Naive thymus-derived CD4-positive, alpha-beta T cell (primary cell): ENCODE measurements at regions of chr11 and their contacts with region 1.

Region 1: DNA sequence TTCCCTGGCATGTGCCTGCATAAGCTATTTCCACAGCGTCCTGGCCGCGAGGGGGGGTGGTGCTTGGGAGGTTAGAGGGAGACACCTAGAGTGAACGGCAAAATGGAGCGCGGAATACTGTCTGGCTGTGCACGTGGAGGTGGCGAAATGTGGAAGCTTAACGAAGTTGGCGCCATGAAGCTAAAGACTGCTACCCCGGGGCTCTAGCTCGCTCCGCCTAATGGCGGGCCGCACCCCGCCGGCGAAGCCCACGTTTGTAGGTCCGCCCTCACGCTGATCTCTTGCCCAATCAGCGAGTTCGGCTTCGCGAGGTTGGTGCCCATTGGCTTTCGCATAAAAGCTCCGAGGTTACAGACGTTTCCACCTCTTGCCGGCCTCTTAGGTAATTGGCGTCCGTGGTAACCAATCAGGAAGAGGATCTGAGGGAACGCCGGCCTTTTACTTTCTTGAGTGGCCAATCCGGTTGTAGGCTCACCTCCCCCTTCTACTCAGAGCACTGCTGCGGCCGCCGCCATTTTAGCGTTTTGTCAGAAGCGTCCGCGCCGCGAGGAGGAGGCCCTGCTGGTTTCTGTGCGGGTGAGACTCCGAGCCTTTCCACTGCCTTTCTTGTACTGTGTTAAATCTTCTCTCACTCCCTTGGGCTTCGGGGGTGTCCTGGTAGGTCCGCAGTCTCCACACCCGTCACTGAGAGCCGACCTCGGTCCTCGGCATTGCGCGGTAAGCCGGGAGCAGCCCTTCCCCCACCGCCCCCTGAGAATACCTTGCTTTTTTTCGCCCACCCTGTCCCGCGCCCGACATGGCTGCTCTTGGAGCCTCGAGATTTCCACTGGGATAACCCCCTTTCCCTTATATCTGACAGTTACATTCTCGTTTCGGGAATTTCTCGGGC is at the start of gene RBM4:
- DNase-seq: peak; percentile 80 to 99 (median 98)
- ATAC-seq: peak; percentile 93
- H3K4me3 ChIP-seq: peak within 1 kb of the TSS; percentile 91
- H3K4me3 Mint-ChIP-seq: peak within 1 kb of the TSS; percentile 92 to 100 (median 94)
- H3K27ac ChIP-seq: peak within 1 kb of the TSS; percentile 93
- H3K27ac Mint-ChIP-seq: peak within 1 kb of the TSS; percentile 87 to 98 (median 96)
- H3K4me1 ChIP-seq: peaks cover 44 to 48% of the 10 kb centered on the region in 2 donors
- H3K4me1 Mint-ChIP-seq: peaks cover 45 to 73% (median 68%) of the 10 kb centered on the region in 7 donors
- H3K27me3 ChIP-seq: no peaks in the 10 kb centered on the region
- H3K27me3 Mint-ChIP-seq: no peaks in the 10 kb centered on the region
- total RNA-seq, gene RBM4: 139 to 239 (median 198) TPM

Region 2: GRCh38 chr11:66408488-66409214 is 229.8 kb before region 1 on chr11:
- CTCF ChIA-PET with region 1: no interaction called
- POLR2A ChIA-PET with region 1: no interaction called
- intact Hi-C with region 1: loop called in 1 of 2 experiments (anchors 1 kb)
- DNase-seq: peak; percentile 81 to 98 (median 88)
- ATAC-seq: peak; percentile 98
- H3K4me3 ChIP-seq: peak overlapping the region; percentile 51
- H3K4me3 Mint-ChIP-seq: peak overlapping the region; percentile 42 to 86 (median 84)
- H3K27ac ChIP-seq: no peak overlapping the region
- H3K27ac Mint-ChIP-seq: peak overlapping the region in 3 of 9 donors; percentile 4 to 75 (median 20)
- H3K4me1 ChIP-seq: peaks cover 4 to 5% of the 10 kb centered on the region in 2 donors
- H3K4me1 Mint-ChIP-seq: peaks cover 0 to 5% (median 4%) of the 10 kb centered on the region in 7 donors
- H3K27me3 ChIP-seq: no peaks in the 10 kb centered on the region
- H3K27me3 Mint-ChIP-seq: peaks cover 17 to 35% (median 28%) of the 10 kb centered on the region in 5 donors

Region 3: DNA sequence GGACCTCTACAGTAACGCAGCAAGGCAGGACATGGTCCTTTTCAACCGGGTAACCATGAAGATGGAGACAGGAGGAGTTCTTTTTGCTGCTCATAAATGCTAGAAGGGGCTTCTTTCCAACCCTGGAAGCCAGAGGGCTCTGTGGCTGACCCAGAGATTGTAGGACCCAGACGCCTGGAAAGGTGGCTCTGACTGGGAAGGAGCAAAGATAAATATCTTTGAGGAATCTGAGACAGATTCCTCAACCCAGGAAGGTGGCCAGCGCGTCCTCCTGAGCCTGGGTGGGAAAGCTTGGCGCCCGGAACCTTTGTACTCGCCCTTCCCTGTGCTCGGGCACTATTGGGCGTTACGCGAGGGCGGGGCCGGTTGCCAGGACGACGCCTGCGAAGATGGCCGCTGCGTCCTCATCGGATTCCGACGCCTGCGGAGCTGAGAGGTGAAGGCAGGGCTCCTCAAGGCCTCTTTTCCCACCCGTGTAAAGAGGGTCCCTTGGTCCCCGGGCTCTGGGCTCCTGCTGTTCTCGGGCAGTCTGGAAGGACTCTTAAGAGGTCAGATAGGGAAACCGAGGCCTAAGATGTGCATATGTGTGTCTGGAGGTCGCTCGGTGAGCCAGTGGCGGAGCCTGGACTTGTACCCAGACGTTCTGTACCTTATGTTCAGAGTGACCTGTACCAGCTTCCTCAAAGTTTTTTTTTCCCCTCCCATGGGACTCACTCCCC is 128.0 kb before region 1 on chr11 and contains the start of gene BBS1:
- CTCF ChIA-PET with region 1: no interaction called
- POLR2A ChIA-PET with region 1: interaction called, 5 read pairs
- intact Hi-C with region 1: loop called in 1 of 2 experiments (anchors 1 kb)
- DNase-seq: peak; percentile 64 to 85 (median 78)
- ATAC-seq: peak; percentile 98
- H3K4me3 ChIP-seq: peak within 1 kb of the TSS; percentile 89
- H3K4me3 Mint-ChIP-seq: peak within 1 kb of the TSS; percentile 86 to 95 (median 90)
- H3K27ac ChIP-seq: peak within 1 kb of the TSS; percentile 65
- H3K27ac Mint-ChIP-seq: peak within 1 kb of the TSS; percentile 36 to 77 (median 67)
- H3K4me1 ChIP-seq: peaks cover 6 to 10% of the 10 kb centered on the region in 2 donors
- H3K4me1 Mint-ChIP-seq: peaks cover 9 to 24% (median 18%) of the 10 kb centered on the region in 7 donors
- H3K27me3 ChIP-seq: no peaks in the 10 kb centered on the region
- H3K27me3 Mint-ChIP-seq: no peaks in the 10 kb centered on the region
- total RNA-seq, gene BBS1: 16.9 to 38.2 (median 23.6) TPM

Region 4: GRCh38 chr11:66592457-66593302 is 45.7 kb before region 1 on chr11 and contains the starts of genes CCDC87 and CCS:
- CTCF ChIA-PET with region 1: no interaction called
- POLR2A ChIA-PET with region 1: interaction called, 14 read pairs
- intact Hi-C with region 1: loop called (anchors 1 kb)
- DNase-seq: peak; percentile 94 to 98 (median 96)
- ATAC-seq: peak; percentile 98
- H3K4me3 ChIP-seq: peak within 1 kb of the TSS; percentile 98
- H3K4me3 Mint-ChIP-seq: peak within 1 kb of the TSS; percentile 89 to 100 (median 98)
- H3K27ac ChIP-seq: peak within 1 kb of the TSS; percentile 94
- H3K27ac Mint-ChIP-seq: peak within 1 kb of the TSS; percentile 90 to 100 (median 97)
- H3K4me1 ChIP-seq: peaks cover 9 to 30% of the 10 kb centered on the region in 2 donors
- H3K4me1 Mint-ChIP-seq: peaks cover 13 to 40% (median 28%) of the 10 kb centered on the region in 7 donors
- H3K27me3 ChIP-seq: no peaks in the 10 kb centered on the region
- H3K27me3 Mint-ChIP-seq: no peaks in the 10 kb centered on the region
- total RNA-seq, gene CCDC87: 0.11 to 1.2 (median 0.60) TPM in 4 of 5 experiments, not detected in the other
- total RNA-seq, gene CCS: 32.8 to 63.5 (median 42.5) TPM

Region 5: GRCh38 chr11:66958232-66958955 is 320.0 kb after region 1 on chr11 and contains the start of gene PC:
- CTCF ChIA-PET with region 1: no interaction called
- POLR2A ChIA-PET with region 1: interaction called, 3 read pairs
- intact Hi-C with region 1: loop called in 1 of 2 experiments (anchors 5 kb)
- DNase-seq: peak; percentile 83 to 98 (median 96)
- ATAC-seq: peak; percentile 98
- H3K4me3 ChIP-seq: peak within 1 kb of the TSS; percentile 81
- H3K4me3 Mint-ChIP-seq: peak within 1 kb of the TSS; percentile 82 to 95 (median 91)
- H3K27ac ChIP-seq: peak within 1 kb of the TSS; percentile 64
- H3K27ac Mint-ChIP-seq: peak within 1 kb of the TSS; percentile 76 to 93 (median 87)
- H3K4me1 ChIP-seq: peaks cover 8 to 19% of the 10 kb centered on the region in 2 donors
- H3K4me1 Mint-ChIP-seq: peaks cover 16 to 31% (median 27%) of the 10 kb centered on the region in 7 donors
- H3K27me3 ChIP-seq: no peaks in the 10 kb centered on the region
- H3K27me3 Mint-ChIP-seq: peaks cover 0 to 6% (median 0%) of the 10 kb centered on the region in 5 donors
- total RNA-seq, gene PC: 8.4 to 11.2 (median 10.0) TPM

Region 6: DNA sequence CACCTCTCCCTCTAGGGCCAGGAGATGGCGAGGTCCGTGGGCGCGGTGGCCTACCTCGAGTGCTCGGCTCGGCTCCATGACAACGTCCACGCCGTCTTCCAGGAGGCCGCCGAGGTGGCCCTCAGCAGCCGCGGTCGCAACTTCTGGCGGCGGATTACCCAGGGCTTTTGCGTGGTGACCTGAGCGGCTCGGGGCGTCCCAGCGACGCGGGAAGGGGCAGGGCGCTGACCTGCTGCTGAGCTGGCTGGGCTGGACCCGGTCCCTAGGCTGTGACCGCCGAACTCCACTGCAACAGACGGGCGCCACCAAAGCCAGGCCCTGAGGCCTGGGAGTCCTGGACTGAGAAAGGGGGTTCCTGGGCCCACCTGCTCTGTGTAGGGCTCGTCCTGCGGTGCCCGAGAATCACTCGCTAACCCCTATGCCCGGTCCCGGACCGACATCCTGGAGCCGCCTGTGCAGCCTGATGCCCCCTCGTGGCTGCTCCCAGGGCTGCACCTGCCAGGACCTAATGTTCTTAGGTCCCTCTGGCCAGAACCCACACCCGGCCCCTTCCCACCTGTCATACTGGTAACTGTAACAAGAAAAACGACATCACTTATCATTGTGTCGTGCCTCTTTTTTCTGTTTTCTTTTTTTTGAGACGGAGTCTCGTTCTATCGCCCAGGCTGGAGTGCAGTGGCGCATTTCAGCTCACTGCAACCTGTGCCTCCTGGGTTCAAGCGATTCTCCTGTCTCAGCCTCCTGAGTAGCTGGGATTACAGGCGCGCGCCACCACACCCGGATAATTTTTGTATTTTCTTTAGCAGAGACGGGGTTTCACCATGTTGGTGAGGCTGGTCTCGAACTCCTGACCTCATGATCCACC is 433.2 kb after region 1 on chr11:
- CTCF ChIA-PET with region 1: no interaction called
- POLR2A ChIA-PET with region 1: no interaction called
- intact Hi-C with region 1: no loop called
- DNase-seq: peak; percentile 42 to 81 (median 58)
- ATAC-seq: peak; percentile 93
- H3K4me3 ChIP-seq: peak overlapping the region; percentile 43
- H3K4me3 Mint-ChIP-seq: peak overlapping the region in 9 of 10 donors; percentile 50 to 74 (median 63)
- H3K27ac ChIP-seq: no peak overlapping the region
- H3K27ac Mint-ChIP-seq: no peak overlapping the region
- H3K4me1 ChIP-seq: no peaks in the 10 kb centered on the region
- H3K4me1 Mint-ChIP-seq: peaks cover 0 to 11% (median 4%) of the 10 kb centered on the region in 7 donors
- H3K27me3 ChIP-seq: no peaks in the 10 kb centered on the region
- H3K27me3 Mint-ChIP-seq: peaks cover 0 to 15% (median 5%) of the 10 kb centered on the region in 5 donors

Region 7: GRCh38 chr11:67656278-67656922 is 1018.0 kb after region 1 on chr11:
- CTCF ChIA-PET with region 1: no interaction called
- POLR2A ChIA-PET with region 1: no interaction called
- intact Hi-C with region 1: no loop called
- DNase-seq: no peak
- ATAC-seq: no peak
- H3K4me3 ChIP-seq: no peak overlapping the region
- H3K4me3 Mint-ChIP-seq: no peak overlapping the region
- H3K27ac ChIP-seq: no peak overlapping the region
- H3K27ac Mint-ChIP-seq: peak overlapping the region in 1 of 9 donors; percentile 49
- H3K4me1 ChIP-seq: no peaks in the 10 kb centered on the region
- H3K4me1 Mint-ChIP-seq: peaks cover 0 to 5% (median 0%) of the 10 kb centered on the region in 7 donors
- H3K27me3 ChIP-seq: no peaks in the 10 kb centered on the region
- H3K27me3 Mint-ChIP-seq: peaks cover 0 to 17% (median 0%) of the 10 kb centered on the region in 5 donors